Activated CD8-positive, alpha-beta T cell treated with anti-CD3 and anti-CD28 coated beads, Interleukin-2, amount 10 ng/mL, durations not matched to agents 7 days and 5 days (primary cell): ENCODE measurements at regions of chr22 and their contacts with region 1.

Region 1: GRCh38 chr22:50326959-50327710 is at the start of gene DENND6B:
- DNase-seq: peak; percentile 73
- ATAC-seq: peak; percentile 97
- H3K4me3 Mint-ChIP-seq: peak within 1 kb of the TSS; percentile 78
- H3K27ac Mint-ChIP-seq: peak within 1 kb of the TSS; percentile 87
- H3K4me1 Mint-ChIP-seq: peaks cover 15% of the 10 kb centered on the region
- H3K27me3 Mint-ChIP-seq: peaks cover 26% of the 10 kb centered on the region
- total RNA-seq, gene DENND6B: 6.0 to 7.0 TPM

Region 2: GRCh38 chr22:50200461-50201190 is 126.5 kb before region 1 on chr22 and contains the start of gene SELENOO:
- CTCF ChIA-PET with region 1: no interaction called
- POLR2A ChIA-PET with region 1: no interaction called
- DNase-seq: peak; percentile 94
- ATAC-seq: peak; percentile 91
- H3K4me3 Mint-ChIP-seq: peak within 1 kb of the TSS; percentile 82
- H3K27ac Mint-ChIP-seq: peak within 1 kb of the TSS; percentile 77
- H3K4me1 Mint-ChIP-seq: peaks cover 25% of the 10 kb centered on the region
- H3K27me3 Mint-ChIP-seq: no peaks in the 10 kb centered on the region
- total RNA-seq, gene SELENOO: 23.6 to 24.4 TPM

Region 3: DNA sequence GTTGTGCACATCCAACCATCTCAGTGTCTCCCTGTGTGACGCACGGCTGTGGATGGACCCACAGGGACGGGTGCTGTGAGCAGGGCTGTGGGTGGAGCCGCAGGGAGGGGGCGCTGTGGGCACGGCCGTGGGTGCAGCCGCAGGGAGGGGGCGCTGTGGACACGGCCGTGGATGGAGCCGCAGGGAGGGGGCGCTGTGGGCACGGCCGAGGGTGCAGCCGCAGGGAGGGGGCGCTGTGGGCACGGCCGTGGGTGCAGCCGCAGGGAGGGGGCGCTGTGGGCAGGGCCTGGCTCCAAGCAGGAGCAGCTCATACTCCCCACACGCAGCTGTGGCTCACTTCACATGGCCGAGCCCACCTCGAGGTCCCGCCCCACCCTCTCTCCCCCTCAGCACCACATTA is 51.0 kb before region 1 on chr22:
- CTCF ChIA-PET with region 1: interaction called, 33 read pairs
- POLR2A ChIA-PET with region 1: no interaction called
- DNase-seq: peak; percentile 63
- ATAC-seq: peak; percentile 59
- H3K4me3 Mint-ChIP-seq: no peak overlapping the region
- H3K27ac Mint-ChIP-seq: no peak overlapping the region
- H3K4me1 Mint-ChIP-seq: peaks cover 9% of the 10 kb centered on the region
- H3K27me3 Mint-ChIP-seq: peaks cover 8% of the 10 kb centered on the region

Region 4: DNA sequence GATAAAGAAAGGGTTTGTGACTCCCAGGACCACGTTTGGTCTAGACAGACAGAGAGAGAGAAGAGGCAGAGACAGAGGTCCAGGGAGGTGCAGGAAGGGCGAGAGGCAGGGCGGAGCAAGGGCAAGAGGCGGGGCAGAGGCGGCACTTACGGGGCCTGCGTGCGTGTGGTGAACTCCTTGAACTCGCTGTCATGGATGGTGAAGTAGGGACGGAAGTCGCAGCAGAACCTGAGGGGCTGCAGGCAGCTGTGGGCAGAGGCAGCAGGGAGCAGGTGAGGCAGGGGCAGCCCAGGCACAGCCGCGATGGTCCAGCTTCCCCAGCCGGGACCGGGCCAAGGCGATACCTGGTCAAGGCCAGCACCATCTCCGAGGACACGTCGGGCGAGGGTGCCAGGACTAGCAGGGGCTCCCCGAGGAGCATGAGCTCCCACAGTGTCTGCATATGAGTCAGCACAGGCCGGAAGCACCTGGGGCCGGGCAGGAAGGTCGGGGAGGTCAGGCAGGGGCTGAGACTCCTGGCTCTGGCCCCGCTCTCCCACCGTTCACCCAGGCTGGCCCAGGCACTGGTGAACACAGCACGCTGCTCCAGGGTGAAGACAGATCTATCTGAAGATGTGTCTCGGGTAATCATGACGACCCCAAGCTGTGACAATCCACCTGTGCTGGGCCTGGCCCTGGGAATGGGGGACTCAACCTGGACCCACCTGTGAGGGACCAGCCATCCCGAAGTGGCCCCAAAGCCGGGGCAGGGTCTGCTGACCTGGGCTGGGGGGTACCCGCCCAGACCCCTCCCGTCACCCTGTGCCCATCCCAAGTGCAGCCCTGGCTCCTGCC is 12.5 kb before region 1 on chr22:
- CTCF ChIA-PET with region 1: interaction called, 18 read pairs
- POLR2A ChIA-PET with region 1: interaction called, 7 read pairs
- DNase-seq: peak; percentile 90
- ATAC-seq: peak; percentile 95
- H3K4me3 Mint-ChIP-seq: peak overlapping the region; percentile 79
- H3K27ac Mint-ChIP-seq: peak overlapping the region; percentile 91
- H3K4me1 Mint-ChIP-seq: peaks cover 22% of the 10 kb centered on the region
- H3K27me3 Mint-ChIP-seq: no peaks in the 10 kb centered on the region